ENCODE measurements at regions of chr9 and their contacts with region 1.

Region 1: GRCh38 chr9:5608298-5609225 is 20.3 kb upstream of the RIC1 start:
- DNase-seq: peak in 2 of 3 donors; percentile 42 to 43
- H3K4me3 ChIP-seq: peak overlapping the region; percentile 4 to 90 (median 67)
- H3K27ac ChIP-seq: peak overlapping the region; percentile 53 to 83
- H3K4me1 ChIP-seq: peaks cover 0 to 9% (median 5%) of the 10 kb centered on the region in 4 experiments
- H3K27me3 ChIP-seq: no peaks in the 10 kb centered on the region

Region 2: GRCh38 chr9:5178126-5178805 is 430.3 kb before region 1 on chr9:
- CTCF ChIA-PET with region 1: no interaction called
- POLR2A ChIA-PET with region 1: interaction called, 12 read pairs
- DNase-seq: peak in 2 of 3 donors; percentile 51 to 68
- H3K4me3 ChIP-seq: no peak overlapping the region
- H3K27ac ChIP-seq: no peak overlapping the region
- H3K4me1 ChIP-seq: peaks cover 0 to 4% (median 2%) of the 10 kb centered on the region in 4 experiments
- H3K27me3 ChIP-seq: no peaks in the 10 kb centered on the region

Region 3: GRCh38 chr9:5188060-5188984 is 420.2 kb before region 1 on chr9:
- CTCF ChIA-PET with region 1: no interaction called
- POLR2A ChIA-PET with region 1: no interaction called
- DNase-seq: peak in 1 of 3 donors; percentile 19
- H3K4me3 ChIP-seq: no peak overlapping the region
- H3K27ac ChIP-seq: no peak overlapping the region
- H3K4me1 ChIP-seq: peaks cover 0 to 9% (median 2%) of the 10 kb centered on the region in 4 experiments
- H3K27me3 ChIP-seq: no peaks in the 10 kb centered on the region

Region 4: DNA sequence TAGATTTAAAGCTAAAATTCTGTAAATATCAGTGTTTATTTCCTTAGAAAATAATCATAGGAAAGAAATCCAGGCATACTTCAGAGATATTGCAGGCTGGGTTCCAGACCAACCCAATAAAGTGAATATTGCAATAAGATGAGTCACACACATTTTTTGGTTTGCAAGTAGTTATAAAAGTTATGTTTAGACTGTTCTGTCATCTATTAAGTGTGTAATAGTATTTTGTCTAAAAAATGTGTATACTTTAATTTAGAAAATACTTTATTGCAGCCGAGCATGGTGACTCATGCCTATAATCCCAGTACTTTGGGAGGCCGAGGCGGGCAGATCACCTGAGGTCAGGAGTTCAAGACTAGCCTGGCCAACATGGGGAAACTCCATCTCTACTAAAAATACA is 13.5 kb after region 1 on chr9:
- CTCF ChIA-PET with region 1: interaction called, 11 read pairs
- POLR2A ChIA-PET with region 1: no interaction called
- DNase-seq: no peak
- H3K4me3 ChIP-seq: no peak overlapping the region
- H3K27ac ChIP-seq: no peak overlapping the region
- H3K4me1 ChIP-seq: peaks cover 20 to 33% (median 23%) of the 10 kb centered on the region in 4 experiments
- H3K27me3 ChIP-seq: no peaks in the 10 kb centered on the region

Region 5: DNA sequence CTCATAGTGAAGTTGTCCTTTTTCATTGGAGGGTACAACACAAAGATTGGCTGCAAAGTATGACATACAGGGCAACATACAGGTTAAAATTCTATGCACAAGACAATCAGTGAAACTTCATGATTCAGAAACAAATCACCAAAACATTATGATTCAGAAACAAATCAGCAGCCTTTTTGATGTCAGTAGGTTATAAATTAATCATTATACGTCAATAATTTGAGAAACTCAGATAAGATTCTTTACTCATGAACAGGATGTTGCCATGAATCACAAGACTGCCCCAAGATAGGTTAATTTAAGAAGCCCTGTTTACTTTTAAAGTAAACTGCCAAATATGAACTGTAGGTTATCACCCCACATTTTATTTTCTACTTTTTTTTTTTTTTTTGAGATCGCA is 544.9 kb after region 1 on chr9:
- CTCF ChIA-PET with region 1: no interaction called
- POLR2A ChIA-PET with region 1: no interaction called
- DNase-seq: no peak
- H3K4me3 ChIP-seq: no peak overlapping the region
- H3K27ac ChIP-seq: no peak overlapping the region
- H3K4me1 ChIP-seq: no peaks in the 10 kb centered on the region
- H3K27me3 ChIP-seq: peaks cover 0 to 2% (median 0%) of the 10 kb centered on the region in 5 experiments